CD8-positive, alpha-beta T cell (primary cell): ENCODE measurements at regions of chr20 and their contacts with region 1.

Region 1: DNA sequence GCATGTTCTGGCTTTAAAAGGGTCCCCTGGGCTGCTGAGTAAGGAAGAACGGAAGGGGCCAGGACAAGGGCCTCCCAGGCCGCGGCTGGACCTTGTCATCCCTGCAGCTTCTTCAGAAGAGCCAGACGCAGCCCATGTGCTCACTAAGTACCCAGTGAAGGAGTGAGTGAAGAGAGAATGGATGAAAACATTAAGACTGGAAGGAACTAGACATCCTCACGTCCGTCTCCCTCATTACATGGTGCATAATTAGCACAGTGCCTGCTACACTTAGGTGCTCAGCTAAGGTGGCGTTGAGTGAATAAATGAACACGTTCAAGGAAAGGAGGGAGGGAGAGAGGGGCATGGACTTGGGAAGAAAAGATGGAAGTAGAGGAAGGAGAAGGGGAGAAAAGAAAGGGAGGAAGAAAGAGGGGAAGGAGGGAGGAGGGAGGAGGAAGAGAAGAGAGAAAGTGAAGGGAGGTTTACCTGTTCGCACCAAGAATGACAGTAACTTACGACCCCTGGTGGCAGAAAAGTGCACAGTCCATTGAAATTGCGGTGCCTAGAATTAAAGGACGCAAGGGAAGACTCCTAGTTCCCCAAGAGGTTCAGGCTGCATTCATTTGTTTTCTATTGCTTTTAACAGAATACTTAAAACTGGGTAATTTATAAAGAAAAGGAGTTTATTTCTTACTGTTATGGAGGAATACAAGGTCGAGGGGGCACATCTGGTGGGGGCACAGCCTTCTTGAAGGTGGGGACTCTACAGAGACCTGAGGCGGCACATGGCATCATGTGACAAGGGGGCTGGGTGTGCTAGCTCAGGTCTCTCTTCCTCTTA is 8.0 kb downstream of the TP53RK start:
- DNase-seq: peak; percentile 47 to 75 (median 68)
- ATAC-seq: peak; percentile 83
- H3K4me3 ChIP-seq: no peak overlapping the region
- H3K4me3 Mint-ChIP-seq: no peak overlapping the region
- H3K27ac ChIP-seq: no peak overlapping the region
- H3K27ac Mint-ChIP-seq: peak overlapping the region; percentile 43
- H3K4me1 ChIP-seq: peaks cover 18% of the 10 kb centered on the region
- H3K4me1 Mint-ChIP-seq: peaks cover 44% of the 10 kb centered on the region
- H3K27me3 ChIP-seq: no peaks in the 10 kb centered on the region
- H3K27me3 Mint-ChIP-seq: no peaks in the 10 kb centered on the region
- CTCF ChIP-seq: peak; percentile 79

Region 2: DNA sequence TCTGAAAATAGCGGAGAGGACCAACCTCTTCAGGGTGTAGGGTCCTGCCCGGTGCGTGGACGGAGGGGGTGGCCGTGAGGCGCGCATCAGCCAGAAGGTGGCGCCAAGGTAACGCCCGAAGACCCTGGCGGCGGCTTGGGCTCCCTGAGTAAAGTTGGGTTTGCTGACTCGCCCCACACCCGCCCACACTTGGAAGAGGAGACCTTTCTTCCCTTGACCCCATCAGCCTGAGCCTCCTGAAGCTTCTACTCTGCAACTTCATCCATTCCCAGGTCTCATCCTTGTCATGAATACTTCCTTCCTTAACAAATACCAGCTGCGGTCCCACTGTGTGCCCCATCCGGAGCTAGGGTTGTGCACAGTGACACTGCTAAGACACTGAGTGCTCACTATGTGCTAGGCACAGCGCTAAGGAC is 548.5 kb before region 1 on chr20:
- CTCF ChIA-PET with region 1: no interaction called
- POLR2A ChIA-PET with region 1: no interaction called
- intact Hi-C with region 1: loop called in 1 of 2 experiments (anchors 2 kb)
- DNase-seq: peak in 8 of 9 experiments; percentile 35 to 72 (median 61)
- ATAC-seq: peak; percentile 73
- H3K4me3 ChIP-seq: no peak overlapping the region
- H3K4me3 Mint-ChIP-seq: no peak overlapping the region
- H3K27ac ChIP-seq: no peak overlapping the region
- H3K27ac Mint-ChIP-seq: no peak overlapping the region
- H3K4me1 ChIP-seq: no peaks in the 10 kb centered on the region
- H3K4me1 Mint-ChIP-seq: no peaks in the 10 kb centered on the region
- H3K27me3 ChIP-seq: no peaks in the 10 kb centered on the region
- H3K27me3 Mint-ChIP-seq: peaks cover 50% of the 10 kb centered on the region
- CTCF ChIP-seq: peak; percentile 67

Region 3: DNA sequence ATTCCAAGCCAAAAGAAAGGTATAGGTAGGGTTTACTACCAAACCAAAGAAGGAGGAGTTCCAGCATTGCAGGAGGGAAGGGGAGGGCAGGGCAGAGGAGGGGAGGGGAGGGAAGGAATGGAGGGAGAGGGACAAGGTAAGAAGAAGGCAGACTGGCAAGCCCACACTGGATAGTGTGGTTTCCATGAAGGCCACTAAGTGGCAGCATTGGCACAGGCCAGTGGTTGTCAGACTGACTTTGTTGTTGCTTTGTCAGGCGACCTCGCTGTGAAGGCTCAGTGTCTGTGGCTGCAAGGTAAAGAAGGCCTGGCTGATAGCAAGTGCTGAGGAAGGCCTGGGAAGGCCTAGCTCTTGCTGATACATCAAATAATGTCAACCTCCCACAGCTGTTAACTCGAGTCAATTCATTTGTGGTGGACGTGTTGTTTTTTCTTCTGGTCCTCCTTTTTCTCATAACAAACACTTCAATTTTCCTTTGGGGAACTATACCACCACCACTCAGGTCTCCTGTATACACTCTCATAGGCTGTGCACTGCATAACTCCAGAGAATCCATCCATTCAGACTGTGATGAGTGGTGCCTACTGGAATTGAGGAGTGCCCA is 160.2 kb before region 1 on chr20:
- CTCF ChIA-PET with region 1: interaction called, 13 read pairs
- POLR2A ChIA-PET with region 1: no interaction called
- intact Hi-C with region 1: loop called in 1 of 2 experiments (anchors 1 kb)
- DNase-seq: peak in 8 of 9 experiments; percentile 17 to 69 (median 38)
- ATAC-seq: peak; percentile 68
- H3K4me3 ChIP-seq: no peak overlapping the region
- H3K4me3 Mint-ChIP-seq: no peak overlapping the region
- H3K27ac ChIP-seq: no peak overlapping the region
- H3K27ac Mint-ChIP-seq: no peak overlapping the region
- H3K4me1 ChIP-seq: no peaks in the 10 kb centered on the region
- H3K4me1 Mint-ChIP-seq: no peaks in the 10 kb centered on the region
- H3K27me3 ChIP-seq: no peaks in the 10 kb centered on the region
- H3K27me3 Mint-ChIP-seq: peaks cover 10% of the 10 kb centered on the region
- CTCF ChIP-seq: peak; percentile 60

Region 4: GRCh38 chr20:46701556-46701955 is 20.3 kb after region 1 on chr20:
- CTCF ChIA-PET with region 1: interaction called, 17 read pairs
- POLR2A ChIA-PET with region 1: interaction called, 4 read pairs
- intact Hi-C with region 1: no loop called
- DNase-seq: no peak
- ATAC-seq: no peak
- H3K4me3 ChIP-seq: no peak overlapping the region
- H3K4me3 Mint-ChIP-seq: no peak overlapping the region
- H3K27ac ChIP-seq: no peak overlapping the region
- H3K27ac Mint-ChIP-seq: no peak overlapping the region
- H3K4me1 ChIP-seq: no peaks in the 10 kb centered on the region
- H3K4me1 Mint-ChIP-seq: no peaks in the 10 kb centered on the region
- H3K27me3 ChIP-seq: no peaks in the 10 kb centered on the region
- H3K27me3 Mint-ChIP-seq: peaks cover 57% of the 10 kb centered on the region
- CTCF ChIP-seq: no peak